Ovary (tissue), 10 donors: ENCODE measurements at regions of chr12 and their contacts with region 1.

Region 1: DNA sequence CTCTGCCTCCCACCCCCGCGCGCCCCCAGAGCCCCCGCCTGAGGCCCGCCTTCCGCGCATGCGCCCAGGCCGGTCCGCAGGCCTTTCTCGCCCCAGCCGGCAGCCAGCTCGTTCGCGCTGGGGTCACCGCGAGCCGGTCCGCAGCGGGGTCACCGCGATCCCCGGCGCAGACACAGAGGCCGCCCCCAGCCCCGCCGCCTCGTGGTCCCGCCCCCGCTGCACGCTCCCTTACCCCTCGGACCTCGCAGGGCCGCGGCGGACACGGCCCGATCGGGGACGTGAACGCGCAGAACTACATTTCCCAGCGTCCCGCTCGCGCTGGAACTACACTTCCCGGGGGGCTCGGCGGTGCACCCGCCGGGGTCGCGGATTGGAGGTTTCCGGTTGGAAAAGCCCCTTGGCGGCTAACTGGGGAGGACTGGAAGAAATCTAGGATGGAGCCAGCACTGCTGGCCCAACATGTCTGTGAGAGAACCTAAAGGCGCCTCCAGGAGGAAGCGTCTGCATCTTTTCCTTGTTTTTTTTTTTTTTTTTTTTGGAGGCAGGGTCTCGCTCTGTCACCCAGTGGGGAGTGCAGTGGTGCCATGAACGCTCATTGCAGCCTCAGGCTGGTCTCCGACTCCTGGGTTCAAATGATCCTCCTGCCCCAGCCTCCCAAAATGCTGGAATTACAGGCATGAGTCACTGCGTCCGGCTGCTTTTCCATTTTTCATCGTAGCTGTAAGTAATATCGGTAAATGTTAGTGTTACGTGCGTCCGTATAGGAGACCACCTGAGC is at the start of gene ZNF605:
- DNase-seq: peak; percentile 86 to 92 (median 90)
- H3K4me3 ChIP-seq: peak within 1 kb of the TSS; percentile 89
- H3K27ac ChIP-seq: peak within 1 kb of the TSS; percentile 77 to 89
- H3K4me1 ChIP-seq: peaks cover 8% of the 10 kb centered on the region
- H3K27me3 ChIP-seq: no peaks in the 10 kb centered on the region
- CTCF ChIP-seq: no peak
- EP300 ChIP-seq: no peak
- POLR2A ChIP-seq: no peak
- total RNA-seq, gene ZNF605: 8.3 to 20.9 (median 14.5) TPM

Region 2: DNA sequence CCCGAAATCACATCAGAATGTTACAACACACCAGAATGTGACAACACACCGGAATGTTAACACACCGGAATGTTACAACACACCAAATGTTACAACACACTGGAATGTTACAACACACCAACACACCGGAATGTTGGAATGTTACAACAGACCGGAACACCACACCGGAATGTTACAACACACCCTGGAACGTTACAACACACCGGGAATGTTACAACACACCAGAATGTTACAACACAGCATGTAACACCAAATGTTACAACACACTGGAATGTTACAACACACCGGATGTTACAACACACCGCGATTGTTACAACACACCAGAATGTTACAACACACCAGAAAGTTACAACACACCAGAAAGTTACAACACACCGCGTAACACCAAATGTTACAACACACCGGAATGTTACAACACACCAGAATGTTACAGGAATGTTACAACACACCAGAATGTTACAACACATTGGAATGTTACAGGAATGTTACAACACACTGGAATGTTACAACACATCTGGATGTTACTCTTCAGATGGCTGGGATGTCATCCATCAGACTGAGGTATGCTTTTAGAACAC is 89.9 kb before region 1 on chr12:
- intact Hi-C with region 1: no loop called
- DNase-seq: peak in 1 of 5 donors; percentile 27
- H3K4me3 ChIP-seq: no peak overlapping the region
- H3K27ac ChIP-seq: no peak overlapping the region
- H3K4me1 ChIP-seq: no peaks in the 10 kb centered on the region
- H3K27me3 ChIP-seq: no peaks in the 10 kb centered on the region
- CTCF ChIP-seq: no peak
- EP300 ChIP-seq: no peak
- POLR2A ChIP-seq: no peak

Region 3: DNA sequence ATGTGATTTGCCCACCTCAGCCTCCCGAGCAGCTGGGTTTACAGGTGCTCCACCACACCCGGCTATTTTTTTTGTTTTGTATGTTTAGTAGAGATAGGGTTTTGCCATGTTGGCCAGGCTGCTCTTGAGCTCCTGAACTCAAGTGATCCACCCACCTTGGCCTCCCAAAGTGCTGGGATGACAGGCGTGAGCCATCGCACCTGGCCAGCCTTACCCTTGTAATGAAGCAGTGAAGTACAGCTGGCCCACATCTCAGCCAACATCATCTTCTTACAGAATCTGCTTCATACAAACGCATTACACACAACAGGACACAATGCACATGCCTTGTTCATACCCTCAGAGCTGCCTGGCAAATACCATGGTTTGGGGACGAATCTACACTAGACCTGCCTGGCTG is 37.5 kb before region 1 on chr12:
- intact Hi-C with region 1: loop called in 1 of 4 experiments (anchors 5 kb)
- DNase-seq: no peak
- H3K4me3 ChIP-seq: no peak overlapping the region
- H3K27ac ChIP-seq: no peak overlapping the region
- H3K4me1 ChIP-seq: no peaks in the 10 kb centered on the region
- H3K27me3 ChIP-seq: no peaks in the 10 kb centered on the region
- CTCF ChIP-seq: no peak
- EP300 ChIP-seq: no peak
- POLR2A ChIP-seq: no peak

Region 4: DNA sequence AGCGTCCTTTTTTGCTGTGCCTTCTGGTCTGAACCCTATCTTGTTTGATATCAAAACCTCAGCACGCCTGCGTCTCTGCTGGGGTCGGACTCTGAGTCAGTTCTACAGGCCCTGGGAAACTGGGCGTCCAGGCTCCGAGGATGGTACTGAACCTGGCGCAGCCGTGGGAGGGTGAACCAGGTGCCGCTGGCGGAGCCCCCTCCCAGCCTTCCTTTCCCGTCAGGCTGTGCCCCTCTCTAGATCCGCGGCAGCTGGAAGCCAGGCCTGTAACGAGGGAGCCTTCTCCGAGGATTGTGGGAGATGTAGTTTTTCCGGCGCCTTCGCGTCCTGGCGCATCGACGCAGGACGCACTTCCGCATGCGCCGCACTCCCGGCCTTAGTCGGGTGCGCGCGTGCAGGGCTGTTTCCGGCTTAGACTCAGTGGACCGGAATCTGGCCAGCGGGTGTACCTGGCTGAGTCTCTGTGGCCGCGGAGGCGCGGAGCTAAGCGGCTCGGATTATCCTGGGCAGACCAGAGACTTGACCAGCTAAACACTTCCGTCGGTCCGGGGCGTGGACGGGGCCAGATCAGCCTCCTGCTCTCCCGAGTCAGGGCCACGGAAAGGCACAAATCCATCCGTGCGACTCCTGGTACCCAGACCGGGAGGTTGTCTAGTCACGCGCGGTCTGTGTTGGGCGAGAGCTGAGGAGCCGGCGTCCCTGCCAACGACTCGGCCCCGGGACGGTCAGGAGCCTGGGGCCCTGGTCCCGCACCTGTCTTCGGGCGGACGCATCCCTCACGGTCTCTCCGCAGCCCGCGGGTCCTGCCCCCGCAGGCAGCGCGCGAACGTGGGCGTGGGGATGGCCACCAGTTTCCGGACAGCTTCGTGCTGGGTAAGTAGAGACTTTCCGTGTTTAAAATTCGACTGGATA is 30.1 kb after region 1 on chr12 and contains the start of gene ZNF26:
- intact Hi-C with region 1: loop called in 1 of 4 experiments (anchors 1 kb)
- DNase-seq: peak; percentile 86 to 91 (median 88)
- H3K4me3 ChIP-seq: peak within 1 kb of the TSS; percentile 74
- H3K27ac ChIP-seq: peak within 1 kb of the TSS in 1 of 2 donors; percentile 84
- H3K4me1 ChIP-seq: no peaks in the 10 kb centered on the region
- H3K27me3 ChIP-seq: no peaks in the 10 kb centered on the region
- CTCF ChIP-seq: no peak
- EP300 ChIP-seq: no peak
- POLR2A ChIP-seq: peak; percentile 30
- total RNA-seq, gene ZNF26: 10.8 to 18.9 (median 14.1) TPM